Dorsolateral prefrontal cortex (tissue), 120 donors: ENCODE measurements at regions of chr4 and their contacts with region 1.

Region 1: GRCh38 chr4:141636082-141636770 is at the start of gene IL15:
- DNase-seq: peak in 3 of 10 donors; percentile 26 to 47 (median 34)
- H3K4me3 ChIP-seq: peak within 1 kb of the TSS; percentile 50 to 90 (median 75)
- H3K27ac ChIP-seq: peak within 1 kb of the TSS in 17 of 59 donors; percentile 2 to 81 (median 45)
- H3K27me3 ChIP-seq: peaks cover 0 to 39% (median 5%) of the 10 kb centered on the region in 45 donors
- CTCF ChIP-seq: no peak
- total RNA-seq, gene IL15: 0.07 to 5.2 (median 1.0) TPM

Region 2: DNA sequence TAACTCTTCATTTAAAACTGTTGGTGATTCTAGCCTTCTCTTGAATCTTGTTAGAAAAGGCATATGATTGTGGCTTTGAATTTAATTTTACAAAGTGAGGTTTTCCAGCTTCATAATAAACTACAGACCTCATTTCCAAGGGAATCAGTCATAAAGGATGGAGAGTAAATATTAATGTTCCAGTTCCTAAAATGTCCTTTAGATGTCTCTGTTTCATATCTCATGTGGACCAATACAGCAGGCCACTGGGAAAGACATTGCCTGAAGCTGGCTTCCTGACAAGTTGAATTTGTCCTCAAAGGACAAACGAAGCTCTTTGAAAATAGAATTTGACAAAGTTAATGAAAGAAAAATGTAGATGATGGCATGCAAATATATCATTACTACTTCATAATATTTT is 290.1 kb before region 1 on chr4:
- intact Hi-C with region 1: loop called in 1 of 2 experiments (anchors 10 kb)
- DNase-seq: peak in 2 of 10 donors; percentile 13 to 22
- H3K4me3 ChIP-seq: no peak overlapping the region
- H3K27ac ChIP-seq: no peak overlapping the region
- H3K27me3 ChIP-seq: no peaks in the 10 kb centered on the region
- CTCF ChIP-seq: peak; percentile 23 to 77 (median 54)

Region 3: GRCh38 chr4:141599853-141600252 is 36.4 kb before region 1 on chr4:
- intact Hi-C with region 1: no loop called
- DNase-seq: no peak
- H3K4me3 ChIP-seq: no peak overlapping the region
- H3K27ac ChIP-seq: no peak overlapping the region
- H3K27me3 ChIP-seq: no peaks in the 10 kb centered on the region
- CTCF ChIP-seq: no peak

Region 4: DNA sequence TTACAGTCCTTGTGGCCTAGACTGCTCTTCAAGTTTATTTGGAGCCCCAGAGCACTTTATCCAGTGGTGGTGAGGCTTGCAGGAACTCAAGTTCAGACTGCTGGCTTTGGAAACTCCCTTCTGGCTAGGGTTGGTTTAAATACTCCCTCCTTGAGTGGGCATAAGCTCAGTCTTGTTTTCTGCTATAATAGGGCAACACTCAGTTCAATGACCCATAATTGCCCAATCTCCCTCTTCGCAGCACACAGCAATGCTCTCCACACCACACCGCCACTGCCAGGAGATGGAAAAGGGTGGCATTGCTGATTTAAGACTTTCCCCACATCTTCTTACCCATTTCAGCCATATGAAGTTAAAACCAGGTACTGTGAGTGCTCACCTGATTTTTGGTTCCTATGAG is 1520.6 kb after region 1 on chr4:
- intact Hi-C with region 1: no loop called
- DNase-seq: no peak
- H3K4me3 ChIP-seq: no peak overlapping the region
- H3K27ac ChIP-seq: no peak overlapping the region
- H3K27me3 ChIP-seq: no peaks in the 10 kb centered on the region
- CTCF ChIP-seq: no peak